Activated CD8-positive, alpha-beta T cell treated with anti-CD3 and anti-CD28 coated beads for 36 hours (primary cell): ENCODE measurements at regions of chr12 and their contacts with region 1.

Region 1: GRCh38 chr12:14167005-14167628 is 185.7 kb upstream of the GRIN2B start:
- DNase-seq: peak; percentile 48
- ATAC-seq: no peak
- H3K4me3 Mint-ChIP-seq: no peak overlapping the region
- H3K27ac Mint-ChIP-seq: no peak overlapping the region
- H3K4me1 Mint-ChIP-seq: peaks cover 3% of the 10 kb centered on the region
- H3K27me3 Mint-ChIP-seq: peaks cover 4% of the 10 kb centered on the region
- CTCF ChIP-seq: peak; percentile 98

Region 2: DNA sequence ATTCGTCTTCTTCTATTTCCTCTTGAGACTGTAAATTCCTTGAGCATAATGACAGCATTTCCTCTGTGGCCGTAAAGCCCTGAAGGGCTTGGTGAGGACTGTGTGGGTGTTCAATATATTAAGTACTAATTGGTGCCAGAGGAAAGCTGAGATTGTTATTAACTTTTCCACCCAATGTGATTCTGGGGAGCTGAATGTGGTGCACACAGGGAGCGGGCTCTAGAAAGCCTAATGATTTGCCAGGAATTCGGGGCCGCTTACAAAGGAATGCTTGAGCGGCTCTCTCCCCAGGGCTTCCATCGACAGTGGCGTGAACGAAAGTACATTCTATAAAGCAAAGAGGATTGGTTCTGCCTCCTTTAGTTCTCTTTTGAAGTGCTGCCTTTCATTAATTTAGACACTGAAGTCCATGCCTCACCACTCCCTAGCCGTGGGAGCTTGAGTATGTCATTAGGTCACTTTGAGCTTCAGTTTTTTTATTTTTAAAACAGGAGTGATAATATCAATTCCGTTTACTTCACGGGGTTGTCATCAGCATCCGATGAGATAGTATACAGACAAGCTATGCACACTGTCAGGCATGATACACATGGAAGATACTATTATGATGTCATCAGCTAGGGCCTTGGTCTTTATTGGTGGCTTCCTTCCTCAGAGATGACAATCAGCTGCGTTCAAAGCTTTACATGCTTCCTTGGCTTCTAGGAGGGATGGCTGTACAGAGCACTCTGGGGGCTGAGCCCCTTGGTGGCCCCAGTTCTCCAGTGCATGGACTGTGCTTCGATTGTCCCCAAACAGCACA is 1052.7 kb before region 1 on chr12:
- CTCF ChIA-PET with region 1: no interaction called
- POLR2A ChIA-PET with region 1: no interaction called
- intact Hi-C with region 1: no loop called
- DNase-seq: no peak
- ATAC-seq: no peak
- H3K4me3 Mint-ChIP-seq: no peak overlapping the region
- H3K27ac Mint-ChIP-seq: no peak overlapping the region
- H3K4me1 Mint-ChIP-seq: no peaks in the 10 kb centered on the region
- H3K27me3 Mint-ChIP-seq: peaks cover 7% of the 10 kb centered on the region
- CTCF ChIP-seq: no peak

Region 3: GRCh38 chr12:13278249-13278787 is 888.8 kb before region 1 on chr12:
- CTCF ChIA-PET with region 1: interaction called, 12 read pairs
- POLR2A ChIA-PET with region 1: no interaction called
- intact Hi-C with region 1: no loop called
- DNase-seq: peak; percentile 71
- ATAC-seq: peak; percentile 92
- H3K4me3 Mint-ChIP-seq: no peak overlapping the region
- H3K27ac Mint-ChIP-seq: no peak overlapping the region
- H3K4me1 Mint-ChIP-seq: peaks cover 2% of the 10 kb centered on the region
- H3K27me3 Mint-ChIP-seq: peaks cover 33% of the 10 kb centered on the region
- CTCF ChIP-seq: peak; percentile 98

Region 4: DNA sequence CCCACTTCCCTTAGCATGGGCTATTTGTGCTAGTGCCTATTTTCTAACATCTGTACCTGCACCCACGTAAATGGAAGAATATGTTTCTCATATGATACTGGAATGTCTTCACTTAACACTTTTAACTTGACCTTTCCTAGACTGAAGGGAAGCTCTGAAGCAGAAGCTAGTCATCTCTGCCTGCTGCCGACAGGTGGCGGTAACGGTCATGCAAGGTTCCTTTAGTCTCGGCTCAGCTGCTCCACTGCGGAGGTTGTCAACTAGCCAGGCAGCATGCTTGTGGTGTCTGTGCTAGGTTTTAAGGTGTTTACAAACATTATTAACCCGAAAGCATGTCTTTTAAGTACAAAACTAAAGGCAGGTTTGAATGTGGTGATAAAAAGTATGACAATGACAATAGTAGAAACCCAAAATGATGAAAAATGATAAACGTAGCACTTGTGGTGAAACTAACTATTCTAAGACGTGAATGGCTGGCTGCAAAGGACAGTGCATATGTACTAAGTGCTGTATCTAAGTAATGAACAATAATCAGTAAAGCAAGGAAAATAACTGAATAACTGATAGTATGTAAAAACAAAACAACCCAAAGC is 302.9 kb before region 1 on chr12:
- CTCF ChIA-PET with region 1: interaction called, 24 read pairs
- POLR2A ChIA-PET with region 1: no interaction called
- intact Hi-C with region 1: loop called (anchors 1 kb)
- DNase-seq: peak; percentile 71
- ATAC-seq: peak; percentile 67
- H3K4me3 Mint-ChIP-seq: no peak overlapping the region
- H3K27ac Mint-ChIP-seq: no peak overlapping the region
- H3K4me1 Mint-ChIP-seq: no peaks in the 10 kb centered on the region
- H3K27me3 Mint-ChIP-seq: peaks cover 22% of the 10 kb centered on the region
- CTCF ChIP-seq: peak; percentile 86

Region 5: DNA sequence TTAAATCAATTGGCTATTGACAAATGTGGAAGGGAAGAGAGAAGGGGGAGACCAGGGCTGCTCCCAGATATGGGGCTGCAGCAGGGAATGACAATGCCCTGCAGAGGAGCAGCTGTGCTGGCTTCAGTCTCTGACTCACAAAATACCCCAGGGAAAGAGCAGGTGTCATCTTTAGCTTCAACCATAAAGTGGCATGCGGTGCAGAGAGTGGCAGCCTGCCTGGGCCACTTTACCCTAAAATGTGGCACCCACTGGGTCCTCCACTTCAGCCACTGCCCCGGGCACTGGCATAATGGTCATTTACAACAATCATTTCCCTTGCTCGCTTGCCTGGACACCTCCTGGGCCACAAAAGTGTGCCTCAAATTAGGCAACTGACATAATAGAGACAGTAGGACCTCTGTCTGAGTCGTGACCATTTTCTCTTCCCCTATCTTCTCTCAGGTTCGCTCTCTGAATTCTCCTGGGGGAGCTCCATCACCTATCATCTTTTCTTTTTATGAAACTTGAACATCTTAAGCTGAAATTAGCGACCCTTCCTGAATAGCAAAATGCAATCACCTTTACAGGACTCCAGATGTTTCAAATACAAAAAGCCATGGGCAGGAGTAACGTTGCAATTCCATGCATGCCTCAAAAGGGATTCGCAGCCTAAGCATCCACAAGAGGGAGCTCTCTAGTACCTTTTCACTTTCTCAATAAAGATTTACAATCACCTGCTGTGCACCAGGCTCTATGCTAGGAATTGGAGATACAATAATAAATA is 18.5 kb after region 1 on chr12:
- CTCF ChIA-PET with region 1: interaction called, 24 read pairs
- POLR2A ChIA-PET with region 1: no interaction called
- intact Hi-C with region 1: no loop called
- DNase-seq: peak; percentile 49
- ATAC-seq: no peak
- H3K4me3 Mint-ChIP-seq: no peak overlapping the region
- H3K27ac Mint-ChIP-seq: no peak overlapping the region
- H3K4me1 Mint-ChIP-seq: no peaks in the 10 kb centered on the region
- H3K27me3 Mint-ChIP-seq: peaks cover 10% of the 10 kb centered on the region
- CTCF ChIP-seq: peak; percentile 60